Brain microvascular endothelial cell (primary cell): ENCODE measurements at regions of chr15 and their contacts with region 1.

Region 1: GRCh38 chr15:80152180-80152845 is 486 bp upstream of the FAH start:
- DNase-seq: peak; percentile 93
- H3K4me3 ChIP-seq: peak overlapping the region; percentile 80
- H3K27ac ChIP-seq: no peak overlapping the region
- H3K27me3 ChIP-seq: no peaks in the 10 kb centered on the region
- CTCF ChIP-seq: no peak

Region 2: DNA sequence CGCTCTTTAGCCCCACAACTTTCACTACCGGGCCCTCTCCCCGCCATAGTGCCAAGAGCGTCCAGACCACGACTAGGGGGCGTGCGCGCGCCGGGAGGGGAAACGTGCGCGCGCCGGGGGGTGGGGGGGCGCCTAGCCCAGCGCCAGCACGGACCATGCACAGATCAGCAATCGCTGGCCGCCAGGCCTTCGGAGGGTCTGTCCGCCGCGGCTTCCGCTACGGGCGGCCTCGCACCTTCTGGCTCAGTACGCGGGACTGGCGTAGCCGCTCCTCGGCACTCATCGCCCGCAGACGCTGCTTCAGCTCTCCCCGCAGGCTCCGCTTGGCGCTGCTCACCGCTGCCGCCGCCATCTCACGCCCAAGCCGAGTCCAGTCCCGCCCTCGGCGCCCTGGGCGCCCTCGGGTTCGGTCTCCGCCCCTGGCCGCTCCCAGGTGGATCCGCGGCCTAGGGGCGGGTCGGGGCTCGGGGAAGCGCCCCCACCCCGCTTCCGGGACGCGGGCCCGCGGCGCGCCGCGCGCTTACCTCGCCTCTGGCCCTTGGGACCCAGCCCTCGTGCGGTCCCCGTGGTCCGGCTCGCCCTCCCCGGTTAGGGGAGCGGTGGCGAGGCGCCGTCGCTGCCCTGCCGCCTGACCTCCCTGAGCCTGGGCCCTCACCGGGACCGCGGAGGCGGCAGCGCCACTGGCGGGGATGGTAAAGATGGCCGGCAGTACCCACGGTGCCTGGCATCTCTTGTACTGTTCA is 255.5 kb before region 1 on chr15 and contains the start of gene MTHFS:
- in situ Hi-C with region 1: loop called (anchors 25 kb)
- DNase-seq: peak; percentile 44
- H3K4me3 ChIP-seq: peak within 1 kb of the TSS; percentile 82
- H3K27ac ChIP-seq: peak within 1 kb of the TSS; percentile 69
- H3K27me3 ChIP-seq: no peaks in the 10 kb centered on the region
- CTCF ChIP-seq: peak; percentile 64